ENCODE measurements at regions of chr9 and their contacts with region 1.

Region 1: DNA sequence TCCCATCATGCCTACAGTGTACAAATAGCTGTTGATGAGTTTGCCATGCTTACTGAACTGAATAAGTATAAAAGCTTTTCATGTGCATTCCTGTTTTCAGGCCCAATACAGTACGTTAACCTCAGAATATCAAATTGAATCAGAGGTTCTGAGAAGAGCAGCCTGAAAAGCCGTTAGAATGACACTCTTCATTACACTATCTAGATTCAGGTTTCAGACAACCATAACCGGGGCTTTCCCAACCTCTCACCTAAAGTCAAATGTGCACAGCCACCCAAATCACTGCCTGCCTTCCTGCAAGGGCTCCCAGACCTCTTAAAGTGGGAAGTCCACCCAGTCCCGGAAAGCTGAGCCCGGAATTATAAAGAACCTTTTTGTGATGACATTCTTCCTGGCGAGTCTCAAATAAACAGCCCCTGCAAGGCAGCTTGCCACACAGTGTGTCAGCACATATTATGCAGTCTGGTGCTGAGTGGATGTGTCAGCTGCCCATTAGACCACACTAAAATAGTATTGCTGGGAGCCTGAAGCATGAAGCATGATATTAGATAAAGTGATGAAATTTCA is 245.8 kb downstream of the TLE4 start:
- DNase-seq: peak; percentile 37
- H3K4me3 Mint-ChIP-seq: no peak overlapping the region
- H3K27ac Mint-ChIP-seq: no peak overlapping the region
- H3K4me1 Mint-ChIP-seq: peaks cover 19% of the 10 kb centered on the region
- H3K27me3 Mint-ChIP-seq: peaks cover 15% of the 10 kb centered on the region

Region 2: DNA sequence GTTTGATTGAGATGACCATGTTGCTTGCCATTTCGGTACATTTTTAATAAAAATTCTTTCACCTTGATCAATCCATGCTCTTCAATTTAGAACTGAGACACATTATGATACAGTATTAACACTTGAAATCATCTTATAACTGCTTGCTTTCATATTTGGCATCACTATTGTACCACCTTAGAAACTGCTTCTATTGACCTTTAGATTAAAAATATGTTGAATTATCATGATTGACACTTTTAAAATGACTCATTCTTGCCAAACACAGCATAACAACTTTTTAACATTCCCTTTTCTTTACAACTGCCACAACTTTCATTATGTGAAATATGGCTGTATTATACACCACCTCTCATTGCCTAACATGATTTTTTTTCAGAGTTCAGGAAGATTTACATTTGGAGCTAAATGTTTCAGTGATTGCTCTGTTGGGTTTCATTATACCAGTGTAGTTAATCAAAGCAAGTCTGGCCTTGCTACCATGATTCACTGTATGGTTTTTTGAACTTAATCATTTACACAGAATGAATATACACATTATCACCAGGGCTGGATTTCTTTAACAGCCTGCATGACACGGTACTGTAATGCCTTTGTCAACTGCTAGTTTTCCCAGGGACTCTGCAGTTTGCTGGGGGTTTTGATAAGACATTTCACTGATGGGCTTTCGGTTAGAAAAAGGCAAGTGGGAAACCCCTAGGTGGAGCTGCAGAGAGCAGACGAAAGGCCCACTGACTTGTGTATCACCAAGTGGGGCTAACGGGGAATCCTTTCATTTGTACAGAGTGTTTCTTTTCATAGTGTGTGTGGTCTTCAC is 339.4 kb before region 1 on chr9:
- CTCF ChIA-PET with region 1: no interaction called
- POLR2A ChIA-PET with region 1: no interaction called
- intact Hi-C with region 1: loop called (anchors 5 kb)
- DNase-seq: peak; percentile 30
- H3K4me3 Mint-ChIP-seq: no peak overlapping the region
- H3K27ac Mint-ChIP-seq: no peak overlapping the region
- H3K4me1 Mint-ChIP-seq: peaks cover 3% of the 10 kb centered on the region
- H3K27me3 Mint-ChIP-seq: no peaks in the 10 kb centered on the region

Region 3: GRCh38 chr9:79623799-79624721 is 193.5 kb before region 1 on chr9:
- CTCF ChIA-PET with region 1: no interaction called
- POLR2A ChIA-PET with region 1: no interaction called
- intact Hi-C with region 1: loop called (anchors 10 kb)
- DNase-seq: peak; percentile 47
- H3K4me3 Mint-ChIP-seq: peak overlapping the region; percentile 22
- H3K27ac Mint-ChIP-seq: peak overlapping the region; percentile 81
- H3K4me1 Mint-ChIP-seq: peaks cover 44% of the 10 kb centered on the region
- H3K27me3 Mint-ChIP-seq: no peaks in the 10 kb centered on the region

Region 4: DNA sequence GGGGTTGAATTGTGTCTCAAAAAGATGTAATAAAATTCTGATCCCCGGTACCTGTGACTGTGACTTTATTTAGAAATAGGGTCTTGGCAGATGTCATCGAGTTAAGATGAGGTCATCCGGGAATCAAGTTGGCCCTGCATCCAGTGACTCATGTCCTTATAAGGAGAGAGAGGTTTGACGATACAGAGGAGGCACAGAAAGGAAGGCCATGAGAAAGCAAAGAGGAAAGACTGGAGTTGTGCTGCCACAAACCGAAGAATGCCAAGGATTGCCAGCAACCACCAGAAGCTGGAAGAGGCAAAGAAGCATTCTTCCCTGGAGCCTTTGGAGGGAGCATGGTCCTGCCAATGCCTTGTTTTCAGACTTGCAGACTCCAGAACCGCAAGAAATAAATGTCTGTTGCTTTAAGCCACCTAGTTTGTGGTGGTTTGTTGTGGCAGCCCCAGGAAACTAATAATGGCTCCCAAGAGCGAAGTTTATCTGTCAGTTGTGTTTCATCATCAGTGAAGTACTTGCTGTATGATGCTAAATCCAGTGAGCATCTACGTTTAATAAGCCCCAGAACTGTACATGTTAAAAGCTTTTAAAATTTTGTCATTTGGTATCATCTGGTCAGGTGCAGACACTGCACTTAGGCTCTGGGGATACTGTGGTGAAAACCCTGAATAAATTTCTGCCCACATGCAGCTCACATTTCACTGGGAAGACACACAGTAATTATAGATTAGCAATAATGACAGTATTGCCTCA is 131.0 kb before region 1 on chr9:
- CTCF ChIA-PET with region 1: no interaction called
- POLR2A ChIA-PET with region 1: no interaction called
- intact Hi-C with region 1: loop called (anchors 10 kb)
- DNase-seq: no peak
- H3K4me3 Mint-ChIP-seq: no peak overlapping the region
- H3K27ac Mint-ChIP-seq: no peak overlapping the region
- H3K4me1 Mint-ChIP-seq: peaks cover 25% of the 10 kb centered on the region
- H3K27me3 Mint-ChIP-seq: no peaks in the 10 kb centered on the region

Region 5: DNA sequence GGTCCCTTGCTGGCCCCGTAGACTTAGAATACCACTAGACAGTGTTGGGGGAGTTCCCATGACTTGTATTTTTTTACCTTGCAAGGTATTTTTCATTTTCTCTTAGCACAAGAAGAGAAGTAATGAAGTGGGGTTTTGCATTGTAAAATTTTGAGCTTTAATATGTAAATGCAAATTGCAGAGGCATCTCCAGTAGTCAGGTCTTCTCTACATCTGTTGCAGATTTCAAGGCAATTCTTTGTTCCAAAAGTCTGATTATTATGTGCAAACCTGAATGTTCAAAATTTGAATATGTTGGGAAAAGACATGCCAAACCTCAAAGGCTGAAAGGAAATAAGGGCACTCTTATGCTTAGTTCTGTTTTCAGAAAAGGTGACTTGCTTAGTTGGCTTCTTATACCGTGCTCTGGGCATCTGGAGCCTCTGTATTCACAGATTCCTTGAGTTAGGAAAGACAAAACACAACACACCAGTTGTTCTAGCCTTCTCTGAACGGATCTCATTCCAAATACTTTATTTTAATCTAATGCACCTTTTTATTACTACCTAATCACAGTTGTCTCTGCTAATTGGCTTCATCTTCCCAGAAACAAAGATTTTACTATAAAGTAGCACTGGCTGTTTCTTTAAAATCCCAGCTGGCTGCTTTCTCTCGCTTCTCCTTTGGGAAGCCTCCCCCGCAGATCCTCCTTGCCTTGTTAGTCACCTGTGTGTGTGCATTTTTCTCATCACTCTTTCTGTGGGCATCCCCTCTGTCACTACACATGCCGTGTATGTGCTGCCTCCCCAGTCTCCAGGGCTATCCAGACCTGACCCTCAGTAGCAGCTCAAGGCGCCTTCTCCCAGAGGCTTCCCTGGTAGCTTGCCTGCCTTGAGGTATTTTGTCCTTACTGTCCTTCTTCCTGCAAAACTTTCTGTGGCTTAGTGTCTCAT is 107.5 kb before region 1 on chr9:
- CTCF ChIA-PET with region 1: no interaction called
- POLR2A ChIA-PET with region 1: no interaction called
- intact Hi-C with region 1: no loop called
- DNase-seq: no peak
- H3K4me3 Mint-ChIP-seq: no peak overlapping the region
- H3K27ac Mint-ChIP-seq: no peak overlapping the region
- H3K4me1 Mint-ChIP-seq: no peaks in the 10 kb centered on the region
- H3K27me3 Mint-ChIP-seq: no peaks in the 10 kb centered on the region

Region 6: DNA sequence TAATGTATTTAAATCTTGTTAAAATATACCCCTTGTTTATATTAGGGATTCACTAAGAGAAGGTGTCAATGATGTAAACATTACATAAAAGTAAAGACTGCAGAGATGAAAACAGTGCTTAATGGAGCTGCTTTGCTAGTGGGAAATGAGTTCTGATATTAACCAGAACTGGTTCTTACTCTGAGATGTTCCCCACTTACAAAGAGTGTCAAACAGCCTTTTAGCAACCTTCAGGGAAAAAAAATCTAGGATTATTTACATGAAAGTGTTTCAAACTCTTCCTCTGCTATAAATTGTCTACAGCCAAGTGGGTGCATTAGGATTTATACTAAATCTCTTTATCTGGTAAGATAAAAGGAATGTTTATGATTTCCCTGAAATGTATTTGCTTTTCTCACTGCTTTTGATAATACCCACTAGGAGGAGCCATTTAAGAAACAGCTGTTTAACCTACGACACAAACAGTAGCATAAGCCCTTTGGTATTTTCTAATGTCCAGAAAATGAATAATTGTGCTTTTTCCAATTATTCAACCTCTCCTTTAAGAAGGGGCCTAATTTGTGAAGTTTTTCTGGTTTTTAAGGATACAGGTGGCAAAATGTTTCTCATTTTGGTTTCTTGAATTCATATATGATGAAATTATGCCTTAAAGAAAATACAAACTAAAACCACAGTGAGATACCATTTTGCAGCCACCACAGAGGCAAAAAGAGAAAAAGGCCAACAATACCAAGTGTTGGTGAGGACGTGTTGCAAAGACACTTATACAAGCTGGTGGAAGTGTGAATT is 59.4 kb before region 1 on chr9:
- CTCF ChIA-PET with region 1: no interaction called
- POLR2A ChIA-PET with region 1: no interaction called
- intact Hi-C with region 1: loop called (anchors 10 kb)
- DNase-seq: no peak
- H3K4me3 Mint-ChIP-seq: no peak overlapping the region
- H3K27ac Mint-ChIP-seq: no peak overlapping the region
- H3K4me1 Mint-ChIP-seq: no peaks in the 10 kb centered on the region
- H3K27me3 Mint-ChIP-seq: no peaks in the 10 kb centered on the region

Region 7: DNA sequence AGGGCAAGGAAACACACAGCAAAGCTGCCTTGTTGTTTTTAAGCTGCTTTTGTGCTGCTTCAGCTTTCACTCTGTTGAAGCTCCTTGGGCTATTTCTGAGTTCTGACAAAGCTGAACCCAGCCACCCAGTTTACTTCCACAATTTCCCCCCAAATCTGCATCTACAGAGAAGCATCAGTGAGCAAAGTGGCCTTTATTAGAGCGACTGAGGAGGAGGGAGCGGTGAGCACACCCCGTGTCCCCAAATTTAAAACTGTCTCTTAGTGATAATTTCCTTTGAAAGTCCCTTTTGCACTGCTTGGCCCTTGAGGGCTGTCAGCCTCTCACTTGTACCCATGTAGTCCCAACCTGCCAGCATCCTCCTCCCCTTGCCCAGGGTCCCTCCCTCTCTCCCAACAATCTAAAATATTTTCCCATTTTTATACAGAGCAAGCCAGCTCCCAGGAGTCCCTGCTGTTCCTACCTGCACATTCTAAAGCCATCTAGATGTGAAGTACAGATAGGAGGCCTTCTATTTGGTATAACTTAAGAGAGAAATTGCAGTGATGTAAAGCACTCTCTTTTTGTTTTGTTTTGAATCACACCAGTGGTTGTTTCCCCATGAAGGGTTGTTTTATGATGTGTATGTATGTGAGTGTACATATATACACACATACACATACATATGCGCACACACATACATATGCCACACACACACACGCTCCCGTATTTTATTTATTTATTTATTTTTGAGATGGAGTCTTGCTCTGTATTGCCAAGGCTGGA is 67.8 kb after region 1 on chr9:
- CTCF ChIA-PET with region 1: no interaction called
- POLR2A ChIA-PET with region 1: no interaction called
- intact Hi-C with region 1: no loop called
- DNase-seq: no peak
- H3K4me3 Mint-ChIP-seq: no peak overlapping the region
- H3K27ac Mint-ChIP-seq: no peak overlapping the region
- H3K4me1 Mint-ChIP-seq: peaks cover 34% of the 10 kb centered on the region
- H3K27me3 Mint-ChIP-seq: no peaks in the 10 kb centered on the region

Region 8: GRCh38 chr9:80156756-80157472 is 339.4 kb after region 1 on chr9:
- CTCF ChIA-PET with region 1: no interaction called
- POLR2A ChIA-PET with region 1: no interaction called
- intact Hi-C with region 1: no loop called
- DNase-seq: no peak
- H3K4me3 Mint-ChIP-seq: no peak overlapping the region
- H3K27ac Mint-ChIP-seq: no peak overlapping the region
- H3K4me1 Mint-ChIP-seq: no peaks in the 10 kb centered on the region
- H3K27me3 Mint-ChIP-seq: peaks cover 12% of the 10 kb centered on the region

Measured in activated CD4-positive, alpha-beta memory T cell treated with anti-CD3 and anti-CD28 coated beads for 36 hours (primary cell).